T-cell (primary cell): ENCODE measurements at regions of chr12 and their contacts with region 1.

Region 1: GRCh38 chr12:89949457-89950195 is 241.0 kb upstream of the ATP2B1 start:
- DNase-seq: peak in 32 of 35 experiments; percentile 17 to 91 (median 56)
- ATAC-seq: peak; percentile 81 to 97 (median 84)
- H3K4me3 ChIP-seq: no peak overlapping the region
- H3K4me3 Mint-ChIP-seq: peak overlapping the region; percentile 18 to 41 (median 34)
- H3K27ac ChIP-seq: peak overlapping the region; percentile 92
- H3K27ac Mint-ChIP-seq: peak overlapping the region; percentile 81 to 87
- H3K4me1 ChIP-seq: peaks cover 14 to 36% of the 10 kb centered on the region in 2 experiments
- H3K4me1 Mint-ChIP-seq: peaks cover 50 to 69% (median 50%) of the 10 kb centered on the region in 3 donors
- H3K27me3 ChIP-seq: no peaks in the 10 kb centered on the region
- H3K27me3 Mint-ChIP-seq: no peaks in the 10 kb centered on the region

Region 2: GRCh38 chr12:89825591-89826449 is 123.8 kb before region 1 on chr12:
- CTCF ChIA-PET with region 1: no interaction called
- POLR2A ChIA-PET with region 1: interaction called in 1 of 2 experiments, 10 read pairs
- DNase-seq: peak in 1 of 35 experiments; percentile 32
- ATAC-seq: peak in 2 of 4 experiments; percentile 26 to 48
- H3K4me3 ChIP-seq: no peak overlapping the region
- H3K4me3 Mint-ChIP-seq: no peak overlapping the region
- H3K27ac ChIP-seq: no peak overlapping the region
- H3K27ac Mint-ChIP-seq: no peak overlapping the region
- H3K4me1 ChIP-seq: peaks cover 0 to 2% of the 10 kb centered on the region in 2 experiments
- H3K4me1 Mint-ChIP-seq: peaks cover 14 to 20% (median 19%) of the 10 kb centered on the region in 3 donors
- H3K27me3 ChIP-seq: no peaks in the 10 kb centered on the region
- H3K27me3 Mint-ChIP-seq: no peaks in the 10 kb centered on the region

Region 3: DNA sequence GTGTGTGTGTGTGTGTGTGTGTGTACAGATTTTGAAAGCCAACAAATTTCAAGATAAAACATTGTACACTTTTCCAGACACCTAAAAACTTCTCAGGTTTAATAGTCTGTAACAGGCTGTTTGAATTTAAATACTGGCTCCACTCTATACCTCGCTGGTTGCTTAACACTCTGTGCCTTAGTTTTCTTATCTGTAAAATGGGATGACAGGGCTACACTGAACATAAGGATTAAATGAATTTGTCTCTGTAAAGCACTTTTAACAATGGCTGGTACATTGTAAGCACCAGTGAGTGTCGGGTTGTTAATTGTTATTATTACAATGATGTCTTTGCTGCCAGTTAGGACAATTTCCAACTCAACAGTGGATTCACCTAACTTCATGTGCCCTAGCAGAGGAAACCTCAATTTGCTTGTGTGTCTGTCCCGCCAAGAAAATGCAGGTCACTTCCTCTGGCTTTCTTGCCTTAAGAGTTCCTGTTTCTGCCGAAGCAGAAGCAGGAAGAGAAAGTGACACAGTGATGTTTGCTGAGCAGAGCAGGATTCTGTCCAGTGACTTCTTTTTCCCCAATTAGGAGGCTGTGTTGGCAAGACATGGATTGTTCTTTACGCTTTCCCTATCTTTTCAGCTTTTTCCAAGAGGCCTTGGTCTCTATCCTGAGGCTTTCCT is 87.0 kb before region 1 on chr12:
- CTCF ChIA-PET with region 1: interaction called in 1 of 2 experiments, 9 read pairs
- POLR2A ChIA-PET with region 1: interaction called in 1 of 2 experiments, 35 read pairs
- DNase-seq: peak in 32 of 35 experiments; percentile 12 to 77 (median 41)
- ATAC-seq: peak; percentile 34 to 75 (median 64)
- H3K4me3 ChIP-seq: peak overlapping the region; percentile 26 to 35
- H3K4me3 Mint-ChIP-seq: peak overlapping the region; percentile 74 to 82 (median 80)
- H3K27ac ChIP-seq: peak overlapping the region; percentile 96
- H3K27ac Mint-ChIP-seq: peak overlapping the region; percentile 95 to 97
- H3K4me1 ChIP-seq: peaks cover 29 to 33% of the 10 kb centered on the region in 2 experiments
- H3K4me1 Mint-ChIP-seq: peaks cover 67 to 73% (median 70%) of the 10 kb centered on the region in 3 donors
- H3K27me3 ChIP-seq: no peaks in the 10 kb centered on the region
- H3K27me3 Mint-ChIP-seq: no peaks in the 10 kb centered on the region

Region 4: DNA sequence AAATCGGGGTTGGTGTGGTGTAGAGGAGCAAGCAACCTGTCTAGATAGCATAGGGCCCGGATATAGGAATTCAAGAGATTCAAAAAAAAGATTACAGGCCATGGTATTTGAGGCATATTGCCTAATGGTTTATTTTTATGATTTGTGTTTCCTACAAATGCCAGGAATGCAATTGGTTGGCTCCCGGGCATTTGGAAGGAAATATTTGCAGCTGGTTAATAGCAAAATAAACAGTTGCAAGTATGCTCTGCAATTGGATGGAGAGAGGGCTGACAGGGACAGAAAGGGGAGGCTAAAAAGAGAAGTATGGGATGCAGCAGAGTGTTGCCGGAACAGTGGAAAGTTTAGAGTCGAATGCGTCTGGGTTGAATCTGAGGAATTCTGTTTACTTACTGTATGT is 74.7 kb after region 1 on chr12:
- CTCF ChIA-PET with region 1: no interaction called
- POLR2A ChIA-PET with region 1: no interaction called
- DNase-seq: no peak
- ATAC-seq: no peak
- H3K4me3 ChIP-seq: no peak overlapping the region
- H3K4me3 Mint-ChIP-seq: no peak overlapping the region
- H3K27ac ChIP-seq: no peak overlapping the region
- H3K27ac Mint-ChIP-seq: no peak overlapping the region
- H3K4me1 ChIP-seq: peaks cover 2 to 19% of the 10 kb centered on the region in 2 experiments
- H3K4me1 Mint-ChIP-seq: peaks cover 11 to 13% (median 13%) of the 10 kb centered on the region in 3 donors
- H3K27me3 ChIP-seq: no peaks in the 10 kb centered on the region
- H3K27me3 Mint-ChIP-seq: peaks cover 0 to 3% of the 10 kb centered on the region in 2 donors